ENCODE measurements at regions of chr7 and their contacts with region 1.

Region 1: GRCh38 chr7:102236592-102237287 is 49.9 kb upstream of the SH2B2 start:
- DNase-seq: peak; percentile 13 to 86
- H3K4me3 ChIP-seq: no peak overlapping the region
- H3K27ac ChIP-seq: no peak overlapping the region
- H3K4me1 ChIP-seq: no peaks in the 10 kb centered on the region; a peak in 1 of 7 replicates
- H3K27me3 ChIP-seq: no peaks in the 10 kb centered on the region
- CTCF ChIP-seq: peak; percentile 76 to 81 (median 76)
- EP300 ChIP-seq: no peak
- POLR2A ChIP-seq: no peak
- RAD21 ChIP-seq: peak; percentile 93 to 96

Region 2: DNA sequence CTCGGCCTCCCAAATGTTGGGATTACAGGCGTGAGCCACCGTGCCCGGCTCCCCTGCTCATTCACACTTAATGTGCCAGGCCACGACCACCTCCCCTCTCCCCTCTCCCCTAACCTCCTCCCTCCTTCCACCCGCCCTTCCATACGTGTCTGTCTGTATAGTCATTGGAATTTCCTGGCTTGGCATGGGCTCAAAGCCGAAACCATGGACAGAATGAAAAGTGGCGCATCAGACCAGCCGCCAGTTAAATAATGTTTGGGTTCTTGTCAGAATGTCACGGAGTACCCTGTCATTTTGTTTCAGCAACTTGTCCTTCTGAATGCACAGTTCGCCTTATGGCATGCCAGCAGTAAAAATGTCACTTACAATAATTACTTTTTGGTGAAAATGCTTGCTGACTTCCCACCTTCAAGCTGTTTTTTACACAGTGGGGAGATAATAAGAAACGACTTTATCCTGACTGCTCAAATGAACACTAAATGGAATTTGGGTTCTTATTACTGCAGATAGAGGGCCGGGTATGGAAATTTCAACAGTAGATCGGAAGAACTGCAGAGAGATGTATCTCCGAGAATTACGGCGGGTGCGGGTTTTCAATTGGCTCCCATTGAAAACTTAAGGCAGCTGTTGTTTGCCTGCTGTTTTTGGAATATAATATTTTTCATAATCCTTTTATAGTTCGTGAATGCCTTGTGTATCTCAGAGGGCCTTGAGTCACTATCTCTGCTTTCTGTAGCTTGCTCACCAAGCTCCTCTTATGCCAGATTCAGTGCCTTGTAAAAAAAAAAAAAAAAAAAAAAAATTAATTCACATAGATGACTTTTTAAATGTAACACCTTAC is 15.6 kb before region 1 on chr7:
- CTCF ChIA-PET with region 1: interaction called, 26 read pairs
- POLR2A ChIA-PET with region 1: no interaction called
- DNase-seq: no peak
- H3K4me3 ChIP-seq: no peak overlapping the region
- H3K27ac ChIP-seq: no peak overlapping the region
- H3K4me1 ChIP-seq: 0 out of 7 replicates have a peak, but pooled peaks cover 0 to 2% (median 0%) of the 10 kb centered on the region in 4 experiments
- H3K27me3 ChIP-seq: no peaks in the 10 kb centered on the region
- CTCF ChIP-seq: no peak
- EP300 ChIP-seq: no peak
- POLR2A ChIP-seq: no peak
- RAD21 ChIP-seq: no peak

Region 3: GRCh38 chr7:102248456-102249395 is 12.0 kb after region 1 on chr7:
- CTCF ChIA-PET with region 1: interaction called, 18 read pairs
- POLR2A ChIA-PET with region 1: interaction called, 3 read pairs
- DNase-seq: peak; percentile 36 to 88
- H3K4me3 ChIP-seq: peak overlapping the region in 2 of 4 experiments; percentile 3 to 52; a peak in 5 of 8 replicates
- H3K27ac ChIP-seq: no peak overlapping the region
- H3K4me1 ChIP-seq: peaks cover 0 to 10% (median 0%) of the 10 kb centered on the region in 4 experiments; a peak in 5 of 7 replicates
- H3K27me3 ChIP-seq: no peaks in the 10 kb centered on the region
- CTCF ChIP-seq: peak; percentile 59 to 64 (median 61)
- EP300 ChIP-seq: no peak
- POLR2A ChIP-seq: no peak
- RAD21 ChIP-seq: peak; percentile 17 to 54; a peak in 3 of 4 replicates

Region 4: GRCh38 chr7:102272075-102272917 is 35.6 kb after region 1 on chr7:
- CTCF ChIA-PET with region 1: interaction called, 11 read pairs
- POLR2A ChIA-PET with region 1: no interaction called
- DNase-seq: peak; percentile 43 to 95
- H3K4me3 ChIP-seq: no peak overlapping the region
- H3K27ac ChIP-seq: no peak overlapping the region
- H3K4me1 ChIP-seq: peaks cover 0 to 3% (median 0%) of the 10 kb centered on the region in 4 experiments; a peak in 1 of 7 replicates
- H3K27me3 ChIP-seq: no peaks in the 10 kb centered on the region
- CTCF ChIP-seq: peak in 2 of 3 experiments; percentile 90 to 98; a peak in 3 of 4 replicates
- EP300 ChIP-seq: no peak
- POLR2A ChIP-seq: no peak
- RAD21 ChIP-seq: peak; percentile 97

Region 5: DNA sequence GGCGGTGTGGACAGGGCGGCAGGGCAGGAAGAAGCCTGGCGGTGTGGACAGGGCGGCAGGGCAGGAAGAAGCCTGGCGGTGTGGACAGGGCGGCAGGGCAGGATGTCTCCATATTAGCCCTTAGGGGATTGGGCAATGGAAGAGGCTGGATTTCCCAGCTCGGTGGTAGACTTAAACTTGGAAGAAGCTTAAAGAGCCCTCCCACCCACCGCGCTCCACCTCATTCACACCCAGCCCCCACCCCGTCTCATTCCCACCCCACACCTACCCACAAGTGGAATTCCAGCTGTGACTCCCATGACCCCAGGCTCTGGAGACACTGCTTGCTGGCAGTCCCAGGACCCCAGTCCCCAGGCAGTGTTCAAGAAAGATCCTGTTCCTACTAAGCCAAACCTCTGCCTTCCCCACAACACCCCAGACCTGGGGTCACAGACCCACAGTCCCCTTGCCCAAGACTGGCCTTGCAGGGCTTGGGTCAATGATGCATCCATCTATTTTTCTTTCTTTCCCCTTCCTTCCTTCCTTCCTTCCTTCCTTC is 85.5 kb after region 1 on chr7:
- CTCF ChIA-PET with region 1: no interaction called
- POLR2A ChIA-PET with region 1: no interaction called
- DNase-seq: no peak
- H3K4me3 ChIP-seq: no peak overlapping the region; a peak in 2 of 8 replicates
- H3K27ac ChIP-seq: no peak overlapping the region
- H3K4me1 ChIP-seq: peaks cover 4 to 10% (median 7%) of the 10 kb centered on the region in 4 experiments; a peak in 6 of 7 replicates
- H3K27me3 ChIP-seq: peaks cover 0 to 2% (median 0%) of the 10 kb centered on the region in 4 experiments; a peak in 3 of 7 replicates
- CTCF ChIP-seq: no peak
- EP300 ChIP-seq: no peak
- POLR2A ChIP-seq: no peak
- RAD21 ChIP-seq: no peak